ENCODE measurements at regions of chr6 and their contacts with region 1.

Region 1: DNA sequence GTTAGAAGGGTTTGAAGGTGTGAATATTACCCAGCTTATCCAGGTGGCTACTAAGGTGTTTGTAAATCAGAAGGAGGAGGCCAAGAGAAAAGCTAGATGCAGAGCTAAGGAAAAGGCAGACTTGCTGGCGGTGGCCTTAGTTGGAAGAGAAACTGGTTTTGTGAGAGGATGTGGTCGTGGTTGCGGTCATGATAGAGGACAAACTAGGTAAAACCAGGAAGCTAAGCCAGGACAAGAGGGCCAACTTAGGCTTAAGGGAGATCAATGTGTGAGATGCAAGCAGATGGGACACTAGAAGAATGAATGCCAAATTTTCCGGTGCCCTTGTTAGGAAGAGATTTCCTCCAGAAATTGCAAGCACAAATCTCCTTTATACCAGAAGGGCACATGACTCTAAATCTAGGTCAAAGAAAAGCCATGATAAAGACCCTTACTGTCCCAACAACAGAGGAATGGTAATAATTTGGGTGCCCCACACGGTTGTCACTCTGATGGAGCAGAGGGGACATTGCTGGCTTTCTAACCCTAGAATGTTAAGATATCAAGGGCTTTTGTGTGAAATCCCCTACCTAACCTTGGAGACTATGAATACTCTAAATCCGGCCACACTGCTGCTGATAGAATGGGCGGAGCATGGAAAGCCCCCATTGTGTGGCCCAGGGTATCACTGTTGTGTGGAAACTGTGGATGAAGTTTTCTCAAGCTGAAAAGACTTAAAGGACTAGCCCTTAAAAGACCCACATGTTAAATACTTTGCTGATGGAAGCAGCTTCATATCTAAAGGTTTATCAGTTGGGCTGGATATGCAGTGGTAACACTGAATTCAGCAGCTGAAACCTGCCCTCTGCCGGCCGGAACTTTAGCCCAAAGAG is 7.8 kb downstream of the IL22RA2 start:
- DNase-seq: peak; percentile 56
- ATAC-seq: peak; percentile 67
- H3K4me3 ChIP-seq: peak overlapping the region in 1 of 5 experiments; percentile 28
- H3K4me3 Mint-ChIP-seq: peak overlapping the region; percentile 59
- H3K27ac ChIP-seq: peak overlapping the region in 1 of 2 donors; percentile 10
- H3K27ac Mint-ChIP-seq: peak overlapping the region; percentile 70
- H3K4me1 ChIP-seq: peaks cover 42 to 56% of the 10 kb centered on the region in 2 donors
- H3K4me1 Mint-ChIP-seq: peaks cover 63% of the 10 kb centered on the region
- H3K27me3 ChIP-seq: no peaks in the 10 kb centered on the region
- H3K27me3 Mint-ChIP-seq: no peaks in the 10 kb centered on the region
- CTCF ChIP-seq: no peak

Region 2: DNA sequence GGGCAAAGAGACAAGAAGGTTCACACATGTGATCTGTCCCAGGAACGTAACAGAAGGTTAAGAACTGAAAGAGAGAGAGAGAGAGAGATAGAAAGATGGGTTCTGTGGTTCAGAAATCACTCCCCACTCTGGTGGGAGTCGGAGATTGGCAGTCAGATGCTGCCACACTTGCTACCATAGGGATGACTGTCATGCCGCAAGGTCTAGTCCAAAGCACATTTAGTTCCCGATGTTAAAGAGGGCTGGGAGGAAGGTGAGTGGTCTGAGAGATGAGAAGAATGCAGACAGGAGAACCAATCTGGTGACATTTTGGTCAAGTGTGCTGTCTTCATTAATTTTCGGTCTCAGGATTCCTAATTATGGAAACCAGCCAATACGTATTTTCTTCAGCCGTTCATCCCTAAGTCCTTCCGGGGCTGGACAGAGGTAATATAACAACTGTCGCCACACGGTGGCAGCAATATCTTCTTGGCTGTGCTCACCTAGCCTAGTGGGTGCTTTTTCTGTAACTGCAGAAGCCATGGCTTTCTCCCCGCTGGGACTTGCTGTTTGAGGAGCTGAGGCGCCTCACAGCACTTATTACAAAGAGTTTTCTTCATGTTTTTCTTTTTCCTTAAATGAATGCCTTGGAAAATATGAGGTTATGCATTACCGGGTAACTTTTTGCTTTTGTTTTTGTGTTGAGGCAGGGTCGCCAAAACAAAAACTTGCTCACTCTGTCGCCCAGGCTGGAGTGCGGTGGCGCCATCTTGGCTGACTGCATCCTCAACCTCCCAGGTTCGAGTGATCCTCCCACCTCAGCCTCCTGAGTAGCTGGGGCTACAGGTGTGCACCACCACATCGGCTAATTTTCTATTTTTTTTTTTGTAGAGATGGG is 197.5 kb before region 1 on chr6:
- CTCF ChIA-PET with region 1: interaction called, 3 read pairs
- POLR2A ChIA-PET with region 1: no interaction called
- intact Hi-C with region 1: loop called (anchors 10 kb)
- DNase-seq: peak; percentile 77
- ATAC-seq: peak; percentile 85
- H3K4me3 ChIP-seq: no peak overlapping the region
- H3K4me3 Mint-ChIP-seq: no peak overlapping the region
- H3K27ac ChIP-seq: no peak overlapping the region
- H3K27ac Mint-ChIP-seq: no peak overlapping the region
- H3K4me1 ChIP-seq: peaks cover 3% of the 10 kb centered on the region in 2 donors
- H3K4me1 Mint-ChIP-seq: peaks cover 7% of the 10 kb centered on the region
- H3K27me3 ChIP-seq: peaks cover 0 to 9% (median 0%) of the 10 kb centered on the region in 4 experiments
- H3K27me3 Mint-ChIP-seq: peaks cover 24% of the 10 kb centered on the region
- CTCF ChIP-seq: peak; percentile 82

Region 3: DNA sequence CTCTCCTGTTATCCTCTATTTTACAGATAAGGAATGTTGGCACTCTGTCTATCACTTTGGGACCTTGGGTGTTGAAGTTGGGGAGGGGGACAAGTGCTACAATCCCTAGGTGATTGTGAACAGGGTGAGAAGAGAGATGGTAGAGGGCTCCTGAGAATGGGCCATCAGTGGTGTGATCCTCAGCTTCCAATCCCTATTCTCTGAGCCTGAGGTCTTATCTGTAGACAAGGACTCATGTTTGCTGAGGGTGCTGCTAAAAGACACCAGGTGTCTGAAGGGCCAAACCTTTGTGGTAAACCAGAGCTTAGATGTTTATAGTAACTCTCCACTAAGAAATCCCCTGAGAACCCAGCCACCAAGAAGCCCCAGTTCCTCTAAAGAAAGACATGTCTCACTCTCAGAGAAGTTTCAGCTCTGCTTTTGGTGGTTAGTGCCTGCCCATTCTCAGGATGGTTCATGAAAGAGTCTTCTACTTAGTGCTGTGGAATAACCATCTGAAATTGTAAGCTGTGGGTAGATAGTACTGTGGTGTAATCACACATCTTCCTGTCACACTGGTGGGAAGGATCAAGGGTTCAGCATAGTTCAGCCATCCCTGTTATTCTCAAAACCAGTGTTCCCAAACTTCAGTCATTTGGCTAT is 62.6 kb before region 1 on chr6:
- CTCF ChIA-PET with region 1: interaction called, 265 read pairs
- POLR2A ChIA-PET with region 1: interaction called, 6 read pairs
- intact Hi-C with region 1: loop called (anchors 1 kb)
- DNase-seq: peak; percentile 92
- ATAC-seq: peak; percentile 81
- H3K4me3 ChIP-seq: peak overlapping the region in 4 of 5 experiments; percentile 8 to 49 (median 16)
- H3K4me3 Mint-ChIP-seq: peak overlapping the region; percentile 86
- H3K27ac ChIP-seq: peak overlapping the region; percentile 97
- H3K27ac Mint-ChIP-seq: peak overlapping the region; percentile 99
- H3K4me1 ChIP-seq: peaks cover 89 to 91% of the 10 kb centered on the region in 2 donors
- H3K4me1 Mint-ChIP-seq: peaks cover 87% of the 10 kb centered on the region
- H3K27me3 ChIP-seq: no peaks in the 10 kb centered on the region
- H3K27me3 Mint-ChIP-seq: no peaks in the 10 kb centered on the region
- CTCF ChIP-seq: no peak

Region 4: GRCh38 chr6:137150072-137150471 is 15.5 kb before region 1 on chr6:
- CTCF ChIA-PET with region 1: interaction called, 17 read pairs
- POLR2A ChIA-PET with region 1: no interaction called
- intact Hi-C with region 1: loop called (anchors 2 kb)
- DNase-seq: peak; percentile 24
- ATAC-seq: peak; percentile 57
- H3K4me3 ChIP-seq: no peak overlapping the region
- H3K4me3 Mint-ChIP-seq: peak overlapping the region; percentile 27
- H3K27ac ChIP-seq: peak overlapping the region in 1 of 2 donors; percentile 49
- H3K27ac Mint-ChIP-seq: peak overlapping the region; percentile 88
- H3K4me1 ChIP-seq: peaks cover 13 to 14% of the 10 kb centered on the region in 2 donors
- H3K4me1 Mint-ChIP-seq: peaks cover 20% of the 10 kb centered on the region
- H3K27me3 ChIP-seq: no peaks in the 10 kb centered on the region
- H3K27me3 Mint-ChIP-seq: no peaks in the 10 kb centered on the region
- CTCF ChIP-seq: no peak

Region 5: DNA sequence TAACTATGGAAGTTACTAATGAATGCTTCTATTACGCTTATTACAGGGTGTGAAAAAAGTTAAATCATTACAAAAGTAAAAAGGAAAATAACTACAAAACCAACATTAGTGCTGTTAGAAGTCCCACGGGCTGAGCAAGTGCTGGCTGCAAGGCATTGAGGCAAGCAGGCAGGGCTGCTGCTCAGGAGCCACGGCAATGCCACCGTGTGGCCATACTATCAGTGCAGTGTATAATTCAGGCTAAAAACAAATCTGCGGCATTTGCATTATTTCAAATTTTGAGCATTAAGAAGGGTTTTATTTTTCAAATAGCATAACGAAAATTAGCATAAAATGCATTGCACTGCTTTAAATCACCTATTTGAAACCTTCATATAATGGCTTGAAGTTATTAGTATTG is 36.5 kb after region 1 on chr6:
- CTCF ChIA-PET with region 1: interaction called, 12 read pairs
- POLR2A ChIA-PET with region 1: no interaction called
- intact Hi-C with region 1: loop called (anchors 5 kb)
- DNase-seq: peak; percentile 55
- ATAC-seq: peak; percentile 74
- H3K4me3 ChIP-seq: no peak overlapping the region
- H3K4me3 Mint-ChIP-seq: no peak overlapping the region
- H3K27ac ChIP-seq: no peak overlapping the region
- H3K27ac Mint-ChIP-seq: peak overlapping the region; percentile 61
- H3K4me1 ChIP-seq: peaks cover 10 to 11% of the 10 kb centered on the region in 2 donors
- H3K4me1 Mint-ChIP-seq: peaks cover 31% of the 10 kb centered on the region
- H3K27me3 ChIP-seq: no peaks in the 10 kb centered on the region
- H3K27me3 Mint-ChIP-seq: no peaks in the 10 kb centered on the region
- CTCF ChIP-seq: peak; percentile 67

Region 6: GRCh38 chr6:137227871-137228302 is 62.3 kb after region 1 on chr6:
- CTCF ChIA-PET with region 1: no interaction called
- POLR2A ChIA-PET with region 1: no interaction called
- intact Hi-C with region 1: no loop called
- DNase-seq: no peak
- ATAC-seq: no peak
- H3K4me3 ChIP-seq: no peak overlapping the region
- H3K4me3 Mint-ChIP-seq: no peak overlapping the region
- H3K27ac ChIP-seq: no peak overlapping the region
- H3K27ac Mint-ChIP-seq: no peak overlapping the region
- H3K4me1 ChIP-seq: peaks cover 58 to 62% of the 10 kb centered on the region in 2 donors
- H3K4me1 Mint-ChIP-seq: peaks cover 71% of the 10 kb centered on the region
- H3K27me3 ChIP-seq: no peaks in the 10 kb centered on the region
- H3K27me3 Mint-ChIP-seq: no peaks in the 10 kb centered on the region
- CTCF ChIP-seq: no peak

Region 7: GRCh38 chr6:137261393-137262160 is 96.0 kb after region 1 on chr6:
- CTCF ChIA-PET with region 1: no interaction called
- POLR2A ChIA-PET with region 1: no interaction called
- intact Hi-C with region 1: loop called (anchors 5 kb)
- DNase-seq: peak; percentile 58
- ATAC-seq: peak; percentile 88
- H3K4me3 ChIP-seq: no peak overlapping the region
- H3K4me3 Mint-ChIP-seq: peak overlapping the region; percentile 14
- H3K27ac ChIP-seq: peak overlapping the region; percentile 25 to 40
- H3K27ac Mint-ChIP-seq: peak overlapping the region; percentile 27
- H3K4me1 ChIP-seq: peaks cover 19 to 25% of the 10 kb centered on the region in 2 donors
- H3K4me1 Mint-ChIP-seq: peaks cover 30% of the 10 kb centered on the region
- H3K27me3 ChIP-seq: no peaks in the 10 kb centered on the region
- H3K27me3 Mint-ChIP-seq: no peaks in the 10 kb centered on the region
- CTCF ChIP-seq: no peak